ENCODE measurements at regions of chr2 and their contacts with region 1.

Region 1: GRCh38 chr2:105744091-105744908 is 412 bp upstream of the NCK2 start:
- DNase-seq: peak; percentile 63 to 71 (median 69)
- H3K4me3 ChIP-seq: peak overlapping the region; percentile 36 to 38
- H3K4me3 Mint-ChIP-seq: peak overlapping the region; percentile 84 to 91 (median 88)
- H3K27ac ChIP-seq: peak overlapping the region; percentile 65
- H3K27ac Mint-ChIP-seq: peak overlapping the region; percentile 87 to 94 (median 93)
- H3K4me1 ChIP-seq: peaks cover 75% of the 10 kb centered on the region
- H3K4me1 Mint-ChIP-seq: peaks cover 60 to 89% (median 73%) of the 10 kb centered on the region in 4 donors
- H3K27me3 ChIP-seq: no peaks in the 10 kb centered on the region
- H3K27me3 Mint-ChIP-seq: no peaks in the 10 kb centered on the region

Region 2: DNA sequence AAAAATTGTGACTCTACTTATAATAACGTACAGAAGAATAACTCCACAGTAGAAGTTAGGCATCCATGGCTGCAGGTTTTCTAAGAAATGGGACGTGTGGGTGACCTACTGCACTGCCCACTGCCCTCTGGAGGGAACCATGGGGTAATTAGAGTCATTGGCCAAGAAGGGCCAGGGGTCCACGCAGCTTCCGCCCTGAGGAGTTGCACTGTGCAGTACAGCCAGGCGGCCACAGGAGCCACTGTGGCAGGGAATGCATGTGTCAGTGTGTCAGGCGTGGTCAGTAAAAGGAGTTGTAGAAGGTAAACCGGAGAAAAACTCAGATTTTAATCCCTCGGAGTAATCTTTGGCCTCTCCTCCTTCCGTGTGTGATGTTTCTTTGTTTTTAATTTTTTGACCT is 25.2 kb after region 1 on chr2:
- CTCF ChIA-PET with region 1: interaction called, 8 read pairs
- POLR2A ChIA-PET with region 1: interaction called, 82 read pairs
- intact Hi-C with region 1: no loop called
- DNase-seq: no peak
- H3K4me3 ChIP-seq: no peak overlapping the region
- H3K4me3 Mint-ChIP-seq: peak overlapping the region in 7 of 8 donors; percentile 11 to 80 (median 67)
- H3K27ac ChIP-seq: peak overlapping the region; percentile 9
- H3K27ac Mint-ChIP-seq: peak overlapping the region; percentile 61 to 92 (median 85)
- H3K4me1 ChIP-seq: peaks cover 100% of the 10 kb centered on the region
- H3K4me1 Mint-ChIP-seq: peaks cover 78 to 100% (median 92%) of the 10 kb centered on the region in 4 donors
- H3K27me3 ChIP-seq: no peaks in the 10 kb centered on the region
- H3K27me3 Mint-ChIP-seq: no peaks in the 10 kb centered on the region

Region 3: GRCh38 chr2:105789745-105790460 is 45.6 kb after region 1 on chr2:
- CTCF ChIA-PET with region 1: interaction called, 96 read pairs
- POLR2A ChIA-PET with region 1: interaction called, 33 read pairs
- intact Hi-C with region 1: no loop called
- DNase-seq: peak; percentile 56 to 92 (median 61)
- H3K4me3 ChIP-seq: peak overlapping the region in 1 of 2 donors; percentile 25
- H3K4me3 Mint-ChIP-seq: peak overlapping the region; percentile 78 to 92 (median 84)
- H3K27ac ChIP-seq: peak overlapping the region; percentile 79
- H3K27ac Mint-ChIP-seq: peak overlapping the region; percentile 92 to 98 (median 96)
- H3K4me1 ChIP-seq: peaks cover 98% of the 10 kb centered on the region
- H3K4me1 Mint-ChIP-seq: peaks cover 80 to 98% (median 87%) of the 10 kb centered on the region in 4 donors
- H3K27me3 ChIP-seq: no peaks in the 10 kb centered on the region
- H3K27me3 Mint-ChIP-seq: no peaks in the 10 kb centered on the region

Region 4: GRCh38 chr2:105858868-105859693 is 114.8 kb after region 1 on chr2:
- CTCF ChIA-PET with region 1: interaction called, 5 read pairs
- POLR2A ChIA-PET with region 1: interaction called, 12 read pairs
- intact Hi-C with region 1: loop called (anchors 2 kb)
- DNase-seq: peak in 1 of 5 donors; percentile 59
- H3K4me3 ChIP-seq: peak overlapping the region; percentile 6 to 20
- H3K4me3 Mint-ChIP-seq: peak overlapping the region in 7 of 8 donors; percentile 57 to 94 (median 81)
- H3K27ac ChIP-seq: peak overlapping the region; percentile 81
- H3K27ac Mint-ChIP-seq: peak overlapping the region; percentile 92 to 99 (median 95)
- H3K4me1 ChIP-seq: peaks cover 98% of the 10 kb centered on the region
- H3K4me1 Mint-ChIP-seq: peaks cover 76 to 94% (median 86%) of the 10 kb centered on the region in 4 donors
- H3K27me3 ChIP-seq: no peaks in the 10 kb centered on the region
- H3K27me3 Mint-ChIP-seq: no peaks in the 10 kb centered on the region

Region 5: DNA sequence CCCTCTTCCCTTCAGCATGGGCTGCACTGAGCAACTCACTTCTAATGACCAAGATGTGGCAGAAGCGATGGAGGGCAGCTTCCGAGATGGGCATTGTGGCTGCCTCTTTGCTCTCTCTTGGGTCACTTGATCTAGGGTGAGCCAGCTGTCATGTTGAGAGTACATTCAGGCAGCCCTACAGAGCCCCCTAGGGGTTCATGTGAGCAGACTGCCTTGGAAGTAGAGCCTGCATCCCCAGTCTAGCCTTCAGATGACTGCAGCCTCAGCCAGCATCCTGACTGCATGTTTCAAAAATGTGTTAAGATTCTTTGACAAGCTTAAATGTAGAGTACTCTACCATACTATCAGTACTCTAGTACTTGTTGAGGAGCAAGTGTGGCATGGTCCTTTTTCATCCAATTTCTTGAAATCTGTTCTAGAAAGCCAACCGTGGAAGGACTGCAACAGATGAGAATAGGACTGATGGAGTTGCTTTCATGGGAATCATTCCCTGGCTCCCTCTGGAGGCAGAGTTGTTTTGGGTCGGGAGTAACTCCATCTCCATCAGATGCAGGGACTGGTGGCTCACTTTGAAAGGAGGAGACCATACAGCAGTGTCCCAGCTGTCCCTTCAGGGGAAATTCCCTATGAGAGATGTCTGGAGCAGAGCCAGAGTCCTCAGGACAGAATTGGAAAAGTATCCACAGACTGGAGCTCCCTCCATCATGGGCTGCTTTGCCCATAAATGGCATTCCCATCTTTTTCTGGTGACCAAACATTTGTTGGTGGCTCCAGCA is 144.5 kb after region 1 on chr2:
- CTCF ChIA-PET with region 1: no interaction called
- POLR2A ChIA-PET with region 1: no interaction called
- intact Hi-C with region 1: loop called (anchors 5 kb)
- DNase-seq: no peak
- H3K4me3 ChIP-seq: no peak overlapping the region
- H3K4me3 Mint-ChIP-seq: peak overlapping the region in 2 of 8 donors; percentile 2 to 21
- H3K27ac ChIP-seq: no peak overlapping the region
- H3K27ac Mint-ChIP-seq: peak overlapping the region in 6 of 7 donors; percentile 25 to 93 (median 58)
- H3K4me1 ChIP-seq: peaks cover 60% of the 10 kb centered on the region
- H3K4me1 Mint-ChIP-seq: peaks cover 54 to 69% (median 63%) of the 10 kb centered on the region in 4 donors
- H3K27me3 ChIP-seq: no peaks in the 10 kb centered on the region
- H3K27me3 Mint-ChIP-seq: no peaks in the 10 kb centered on the region

Region 6: DNA sequence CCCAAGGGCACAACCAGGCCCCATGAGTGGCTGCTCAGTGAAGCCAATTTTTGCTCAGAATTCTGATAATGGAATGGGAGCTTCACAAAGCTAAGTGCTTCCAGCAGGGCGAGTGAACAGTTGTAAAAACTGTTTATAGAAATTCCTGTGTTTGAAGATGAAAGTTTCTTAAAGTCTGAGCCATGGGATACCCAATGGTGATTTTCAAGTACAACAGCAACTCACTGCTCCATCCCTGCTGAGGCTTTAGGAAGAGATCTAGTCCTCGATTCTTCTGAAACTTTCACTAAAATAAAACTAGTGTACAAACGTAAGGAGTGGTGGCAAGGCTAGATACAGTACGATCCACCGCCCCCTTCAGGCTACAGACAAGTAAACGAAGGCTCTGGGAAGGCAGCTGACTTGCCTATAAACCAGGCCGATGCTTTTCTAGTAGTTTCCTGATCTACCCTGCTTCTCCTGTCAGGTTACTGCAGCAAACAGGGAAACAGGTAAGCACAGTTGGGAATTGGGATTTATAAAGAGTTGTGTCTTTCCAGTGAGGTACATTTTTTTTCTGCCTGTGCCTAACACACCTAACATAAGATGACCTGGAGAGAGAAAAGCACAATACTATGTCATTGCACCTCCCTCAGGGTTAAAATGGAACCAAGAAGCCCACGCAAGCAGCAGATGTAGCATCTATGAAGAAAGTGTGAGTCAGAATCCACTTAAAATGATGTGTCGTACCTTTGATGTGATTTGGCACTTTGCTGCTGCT is 341.1 kb after region 1 on chr2:
- CTCF ChIA-PET with region 1: interaction called, 13 read pairs
- POLR2A ChIA-PET with region 1: interaction called, 22 read pairs
- intact Hi-C with region 1: loop called (anchors 1 kb)
- DNase-seq: peak; percentile 68 to 76 (median 73)
- H3K4me3 ChIP-seq: no peak overlapping the region
- H3K4me3 Mint-ChIP-seq: peak overlapping the region; percentile 28 to 90 (median 69)
- H3K27ac ChIP-seq: peak overlapping the region; percentile 42
- H3K27ac Mint-ChIP-seq: peak overlapping the region; percentile 87 to 98 (median 93)
- H3K4me1 ChIP-seq: peaks cover 63% of the 10 kb centered on the region
- H3K4me1 Mint-ChIP-seq: peaks cover 39 to 65% (median 55%) of the 10 kb centered on the region in 4 donors
- H3K27me3 ChIP-seq: no peaks in the 10 kb centered on the region
- H3K27me3 Mint-ChIP-seq: no peaks in the 10 kb centered on the region

Region 7: GRCh38 chr2:106323318-106324009 is 579.2 kb after region 1 on chr2:
- CTCF ChIA-PET with region 1: no interaction called
- POLR2A ChIA-PET with region 1: no interaction called
- intact Hi-C with region 1: no loop called
- DNase-seq: no peak
- H3K4me3 ChIP-seq: no peak overlapping the region
- H3K4me3 Mint-ChIP-seq: no peak overlapping the region
- H3K27ac ChIP-seq: no peak overlapping the region
- H3K27ac Mint-ChIP-seq: no peak overlapping the region
- H3K4me1 ChIP-seq: no peaks in the 10 kb centered on the region
- H3K4me1 Mint-ChIP-seq: no peaks in the 10 kb centered on the region
- H3K27me3 ChIP-seq: no peaks in the 10 kb centered on the region
- H3K27me3 Mint-ChIP-seq: peaks cover 9 to 14% of the 10 kb centered on the region in 2 donors

Measured in CD4-positive, alpha-beta memory T cell (primary cell).